ENCODE measurements at regions of chr6 and their contacts with region 1.

Region 1: GRCh38 chr6:83514866-83515466 is 2.6 kb downstream of the PRSS35 start:
- DNase-seq: peak; percentile 63
- H3K4me3 ChIP-seq: no peak overlapping the region
- H3K27ac ChIP-seq: no peak overlapping the region
- H3K27me3 ChIP-seq: no peaks in the 10 kb centered on the region
- CTCF ChIP-seq: peak; percentile 90

Region 2: DNA sequence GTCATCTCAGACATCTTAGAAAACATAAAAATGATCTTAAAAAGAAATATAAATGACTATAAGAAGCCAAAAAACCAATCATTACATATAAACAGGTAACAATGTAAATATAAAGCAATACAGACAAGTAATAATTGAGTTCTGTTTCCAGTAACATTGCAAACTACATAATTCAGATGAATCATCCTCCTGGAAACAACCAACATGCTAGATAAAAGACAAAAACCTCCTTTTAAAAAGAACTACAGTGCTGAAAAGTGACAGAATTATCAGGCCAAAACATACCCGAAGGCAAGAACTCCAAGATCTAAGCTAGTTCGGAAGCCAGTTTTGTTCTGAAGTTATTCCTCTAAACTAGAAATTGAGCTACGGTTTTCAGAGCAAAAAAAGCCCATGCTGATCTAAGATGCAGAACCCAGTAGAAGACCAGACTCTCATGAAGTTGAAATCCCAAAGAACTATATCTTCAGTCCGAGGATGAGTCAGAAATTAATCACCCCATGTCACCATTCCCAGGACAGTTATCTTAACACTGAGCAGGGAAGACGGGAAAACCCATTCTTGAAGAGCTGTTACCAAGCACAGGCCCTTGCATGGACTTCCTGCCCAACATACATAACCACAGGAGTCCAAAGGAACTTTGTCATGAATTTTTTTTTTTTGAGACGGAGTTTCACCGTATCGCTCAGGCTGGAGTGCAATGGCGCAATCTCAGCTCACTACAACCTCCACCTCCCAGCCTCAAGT is 331.7 kb before region 1 on chr6:
- CTCF ChIA-PET with region 1: interaction called, 11 read pairs
- POLR2A ChIA-PET with region 1: no interaction called
- DNase-seq: peak; percentile 47
- H3K4me3 ChIP-seq: no peak overlapping the region
- H3K27ac ChIP-seq: peak overlapping the region; percentile 25
- H3K27me3 ChIP-seq: no peaks in the 10 kb centered on the region
- CTCF ChIP-seq: no peak

Region 3: DNA sequence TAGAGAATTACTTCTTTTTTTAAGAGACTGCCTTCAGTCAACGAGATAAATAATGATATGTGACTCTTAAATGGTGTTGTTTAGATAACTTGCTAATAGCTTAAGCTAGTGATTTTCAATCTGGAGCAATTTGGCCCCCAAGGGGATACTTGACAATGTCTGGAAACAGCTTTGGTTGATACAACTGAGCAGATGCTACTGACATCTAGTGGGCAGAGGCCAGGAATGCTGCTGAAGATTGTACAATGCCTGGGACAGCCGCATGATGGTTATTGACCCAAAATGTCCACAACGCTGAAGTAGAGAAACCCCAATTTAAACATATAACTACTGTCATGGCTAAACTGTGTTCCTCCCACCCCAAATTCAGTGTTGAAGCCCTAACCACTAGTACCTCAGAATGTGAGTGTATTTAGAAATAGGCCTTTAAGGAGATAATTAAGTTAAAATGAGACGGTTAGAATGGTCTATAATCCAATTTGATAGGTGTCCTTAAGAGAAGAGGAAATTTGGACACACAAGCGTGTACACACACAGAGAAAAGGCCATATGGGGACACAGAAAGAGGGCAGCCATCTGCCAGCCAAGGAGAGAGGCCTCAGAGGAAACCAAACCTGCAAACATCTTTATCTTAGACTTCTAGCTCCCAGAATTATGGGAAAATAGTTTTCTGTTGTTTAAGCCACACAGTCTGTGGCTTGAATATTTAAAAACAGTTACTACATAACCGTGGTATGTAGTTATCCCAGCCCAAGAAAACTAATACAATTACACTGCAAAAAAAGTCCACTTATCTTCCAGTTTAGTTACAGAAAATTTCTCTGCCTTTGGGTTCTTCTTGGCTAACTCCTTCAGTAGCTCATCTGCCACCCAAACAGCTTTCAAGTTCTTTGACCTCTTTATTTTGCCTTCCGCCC is 299.6 kb before region 1 on chr6:
- CTCF ChIA-PET with region 1: interaction called, 164 read pairs
- POLR2A ChIA-PET with region 1: interaction called, 3 read pairs
- DNase-seq: peak; percentile 51
- H3K4me3 ChIP-seq: no peak overlapping the region
- H3K27ac ChIP-seq: peak overlapping the region; percentile 85
- H3K27me3 ChIP-seq: no peaks in the 10 kb centered on the region
- CTCF ChIP-seq: peak; percentile 94

Region 4: GRCh38 chr6:83231146-83231545 is 283.8 kb before region 1 on chr6:
- CTCF ChIA-PET with region 1: interaction called, 15 read pairs
- POLR2A ChIA-PET with region 1: interaction called, 3 read pairs
- DNase-seq: peak; percentile 62
- H3K4me3 ChIP-seq: no peak overlapping the region
- H3K27ac ChIP-seq: no peak overlapping the region
- H3K27me3 ChIP-seq: no peaks in the 10 kb centered on the region
- CTCF ChIP-seq: no peak

Region 5: GRCh38 chr6:83413068-83413467 is 101.9 kb before region 1 on chr6:
- CTCF ChIA-PET with region 1: interaction called, 259 read pairs
- POLR2A ChIA-PET with region 1: interaction called, 3 read pairs
- DNase-seq: no peak
- H3K4me3 ChIP-seq: no peak overlapping the region
- H3K27ac ChIP-seq: no peak overlapping the region
- H3K27me3 ChIP-seq: no peaks in the 10 kb centered on the region
- CTCF ChIP-seq: no peak

Region 6: DNA sequence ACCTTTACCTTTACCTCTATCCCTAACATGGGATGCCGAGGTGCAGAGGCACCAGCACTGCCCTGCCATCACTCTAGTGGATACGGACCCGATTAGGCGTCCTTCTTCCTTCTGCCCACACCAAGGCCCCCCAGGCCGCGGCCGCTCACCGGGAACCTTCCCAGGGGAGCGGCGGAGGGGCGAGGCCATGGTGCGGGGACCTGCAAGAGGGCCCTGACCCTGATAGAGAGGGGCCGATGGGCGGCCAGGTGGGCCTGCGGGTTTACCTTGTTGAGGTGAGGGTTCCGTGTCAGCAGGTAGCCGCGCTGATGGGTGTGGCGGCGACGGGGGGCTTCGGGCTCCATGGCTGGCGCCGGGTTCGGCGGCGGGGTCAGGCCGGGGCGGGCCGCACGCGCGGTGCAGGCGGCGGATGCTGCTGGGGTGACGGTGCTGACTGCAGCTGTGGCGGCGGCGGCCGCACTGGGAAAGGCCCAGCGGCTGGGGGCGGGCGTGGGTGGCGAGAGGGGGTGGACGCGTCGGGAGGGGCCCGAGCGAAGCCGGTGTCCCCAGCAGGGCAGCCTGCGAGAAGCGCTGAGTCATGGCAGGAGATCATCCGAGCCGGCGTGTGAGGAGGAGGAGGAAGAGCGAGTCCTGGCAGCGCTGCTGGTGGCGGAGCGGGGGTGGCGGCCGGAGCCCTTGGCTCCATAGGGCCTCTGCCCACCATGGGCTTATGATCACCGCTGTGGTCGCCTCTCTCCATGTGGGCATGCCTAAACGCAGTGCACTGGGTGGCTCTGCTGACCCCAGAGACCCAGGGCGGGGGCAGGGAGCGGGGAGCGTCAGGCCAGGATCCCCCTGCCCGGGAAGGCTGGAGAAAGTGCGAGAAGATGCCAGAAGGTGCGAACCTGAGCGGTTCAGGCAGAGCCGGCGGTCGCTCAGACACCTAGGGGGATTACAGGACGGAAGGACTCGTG is 84.1 kb before region 1 on chr6 and contains the start of gene ME1:
- CTCF ChIA-PET with region 1: interaction called, 14 read pairs
- POLR2A ChIA-PET with region 1: no interaction called
- DNase-seq: peak; percentile 43
- H3K4me3 ChIP-seq: peak within 1 kb of the TSS; percentile 68
- H3K27ac ChIP-seq: peak within 1 kb of the TSS; percentile 63
- H3K27me3 ChIP-seq: no peaks in the 10 kb centered on the region
- CTCF ChIP-seq: no peak
- polyA plus RNA-seq, gene ME1: 29.3 and 31.8 TPM in 2 replicates

Region 7: DNA sequence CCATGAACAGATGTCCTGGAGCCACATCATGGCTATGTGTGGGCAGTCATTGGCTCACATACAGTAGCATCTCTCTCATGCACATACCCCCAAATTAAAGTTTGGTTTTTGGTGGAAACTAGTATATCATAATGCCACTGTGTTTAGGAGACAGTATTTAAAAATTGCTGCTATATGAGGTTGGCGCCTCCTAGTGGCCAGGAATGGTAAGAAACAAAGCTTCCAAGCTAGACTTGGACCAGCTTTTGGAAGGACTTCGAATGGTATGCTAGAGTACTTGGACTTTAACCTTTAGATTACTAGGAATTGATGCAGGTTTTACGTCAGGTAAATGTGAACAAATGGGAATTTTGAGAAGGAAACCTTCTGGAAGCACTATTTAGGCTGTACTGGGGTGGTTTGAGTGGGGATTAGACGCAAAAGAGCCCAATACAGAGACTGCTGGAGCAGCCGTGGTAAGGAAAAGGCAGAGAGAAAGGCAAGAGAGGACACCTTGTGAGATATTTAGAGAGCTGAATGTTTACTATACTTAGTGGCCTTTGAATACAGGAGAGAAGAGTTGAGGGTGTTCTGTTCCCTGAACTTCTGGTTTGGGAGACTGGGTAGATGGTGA is 21.2 kb after region 1 on chr6:
- CTCF ChIA-PET with region 1: interaction called, 13 read pairs
- POLR2A ChIA-PET with region 1: no interaction called
- DNase-seq: no peak
- H3K4me3 ChIP-seq: no peak overlapping the region
- H3K27ac ChIP-seq: no peak overlapping the region
- H3K27me3 ChIP-seq: peaks cover 2% of the 10 kb centered on the region
- CTCF ChIP-seq: peak; percentile 86

Region 8: GRCh38 chr6:83696674-83697073 is 181.7 kb after region 1 on chr6:
- CTCF ChIA-PET with region 1: no interaction called
- POLR2A ChIA-PET with region 1: no interaction called
- DNase-seq: no peak
- H3K4me3 ChIP-seq: no peak overlapping the region
- H3K27ac ChIP-seq: no peak overlapping the region
- H3K27me3 ChIP-seq: no peaks in the 10 kb centered on the region
- CTCF ChIP-seq: no peak